ENCODE measurements at regions of chr20 and their contacts with region 1.

Region 1: DNA sequence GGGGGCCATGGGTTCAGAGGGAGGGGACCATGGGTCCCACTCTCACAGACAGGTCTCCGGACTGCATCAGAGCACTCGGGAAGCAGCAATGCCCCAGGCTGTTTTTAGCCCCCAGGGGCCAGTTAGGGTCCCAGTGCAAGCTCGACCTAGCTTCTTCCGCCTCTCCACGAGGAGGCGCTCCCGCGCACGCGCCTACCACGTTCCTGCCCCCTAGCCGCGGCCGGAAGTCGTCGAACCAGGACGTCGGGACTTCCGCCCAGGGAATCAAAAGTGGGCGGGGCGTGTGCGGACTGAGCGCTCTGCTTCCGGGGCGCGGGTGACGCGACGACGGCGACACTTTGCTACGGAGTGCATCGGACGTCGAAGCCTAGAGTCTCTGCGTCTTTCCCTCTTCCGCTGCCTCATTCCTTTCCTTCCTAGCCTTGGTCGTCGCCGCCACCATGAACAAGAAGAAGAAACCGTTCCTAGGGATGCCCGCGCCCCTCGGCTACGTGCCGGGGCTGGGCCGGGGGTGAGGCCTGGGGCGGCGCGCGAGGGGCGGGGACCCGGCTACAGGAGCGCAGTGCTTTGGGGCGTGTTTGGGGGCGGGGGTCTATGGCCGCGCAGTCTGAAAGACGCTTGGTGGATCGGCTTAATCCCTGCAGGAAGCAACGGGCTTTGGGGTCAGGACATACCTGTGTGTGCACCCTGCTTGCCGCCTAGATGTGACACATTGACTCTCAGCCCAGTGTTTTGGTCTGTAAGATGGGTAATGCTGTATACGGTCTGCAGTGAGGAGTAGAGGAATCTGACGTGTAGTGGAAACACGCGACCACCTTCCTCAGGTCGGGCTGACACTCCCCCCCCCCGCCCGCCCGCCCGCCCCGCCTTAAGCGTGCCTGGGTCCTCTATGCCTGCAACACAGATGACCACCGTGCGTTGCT is at the start of gene PRPF6:
- DNase-seq: peak; percentile 89 to 95 (median 92)
- ATAC-seq: peak; percentile 85
- H3K4me3 ChIP-seq: peak within 1 kb of the TSS; percentile 78
- H3K4me3 Mint-ChIP-seq: peak within 1 kb of the TSS; percentile 88 to 97 (median 95)
- H3K27ac ChIP-seq: peak within 1 kb of the TSS; percentile 95
- H3K27ac Mint-ChIP-seq: peak within 1 kb of the TSS; percentile 87 to 99 (median 96)
- H3K4me1 ChIP-seq: peaks cover 34 to 47% of the 10 kb centered on the region in 2 donors
- H3K4me1 Mint-ChIP-seq: peaks cover 53 to 77% (median 65%) of the 10 kb centered on the region in 7 donors
- H3K27me3 ChIP-seq: no peaks in the 10 kb centered on the region
- H3K27me3 Mint-ChIP-seq: no peaks in the 10 kb centered on the region
- total RNA-seq, gene PRPF6: 71.2 to 95.8 (median 82.9) TPM

Region 2: GRCh38 chr20:62219992-62220665 is 1760.9 kb before region 1 on chr20 and contains the start of gene HRH3:
- CTCF ChIA-PET with region 1: no interaction called
- POLR2A ChIA-PET with region 1: no interaction called
- intact Hi-C with region 1: no loop called
- DNase-seq: peak in 8 of 9 donors; percentile 25 to 69 (median 47)
- ATAC-seq: peak; percentile 87
- H3K4me3 ChIP-seq: no peak within 1 kb of the TSS
- H3K4me3 Mint-ChIP-seq: peak within 1 kb of the TSS in 9 of 10 donors; percentile 20 to 83 (median 47)
- H3K27ac ChIP-seq: no peak within 1 kb of the TSS
- H3K27ac Mint-ChIP-seq: no peak within 1 kb of the TSS
- H3K4me1 ChIP-seq: no peaks in the 10 kb centered on the region
- H3K4me1 Mint-ChIP-seq: peaks cover 0 to 5% (median 3%) of the 10 kb centered on the region in 7 donors
- H3K27me3 ChIP-seq: peaks cover 0 to 24% of the 10 kb centered on the region in 2 donors
- H3K27me3 Mint-ChIP-seq: peaks cover 17 to 52% (median 30%) of the 10 kb centered on the region in 5 donors
- total RNA-seq, gene HRH3: not detected

Region 3: DNA sequence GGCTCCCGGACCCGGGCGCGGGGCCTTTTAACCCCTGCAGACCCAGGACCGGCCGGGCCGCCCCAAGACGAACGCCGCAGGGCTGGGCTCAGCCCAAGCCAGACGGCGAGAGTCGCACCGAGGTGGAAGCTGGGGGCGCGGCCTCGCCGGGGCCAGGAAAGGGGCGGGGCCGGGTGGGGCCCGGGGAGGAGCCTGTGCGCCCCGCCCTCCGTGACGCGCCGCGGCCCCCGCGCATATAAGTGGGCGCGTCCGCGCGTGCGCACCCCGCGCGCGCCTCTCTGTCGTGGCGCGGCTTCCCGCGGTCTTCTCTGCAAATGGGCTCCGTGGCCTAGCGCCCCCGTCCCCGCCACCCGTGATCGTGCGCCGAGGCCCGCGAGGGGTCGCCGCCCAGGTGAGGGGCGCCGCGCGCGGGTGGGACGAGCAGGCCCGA is 460.5 kb before region 1 on chr20 and contains the start of gene PPDPF:
- CTCF ChIA-PET with region 1: no interaction called
- POLR2A ChIA-PET with region 1: interaction called, 5 read pairs
- intact Hi-C with region 1: loop called in 1 of 2 experiments (anchors 1 kb)
- DNase-seq: peak; percentile 76 to 92 (median 84)
- ATAC-seq: peak; percentile 96
- H3K4me3 ChIP-seq: peak within 1 kb of the TSS; percentile 86
- H3K4me3 Mint-ChIP-seq: peak within 1 kb of the TSS; percentile 65 to 89 (median 81)
- H3K27ac ChIP-seq: peak within 1 kb of the TSS; percentile 88
- H3K27ac Mint-ChIP-seq: peak within 1 kb of the TSS in 7 of 9 donors; percentile 51 to 88 (median 79)
- H3K4me1 ChIP-seq: peaks cover 11 to 14% of the 10 kb centered on the region in 2 donors
- H3K4me1 Mint-ChIP-seq: peaks cover 4 to 22% (median 9%) of the 10 kb centered on the region in 7 donors
- H3K27me3 ChIP-seq: no peaks in the 10 kb centered on the region
- H3K27me3 Mint-ChIP-seq: peaks cover 0 to 7% (median 0%) of the 10 kb centered on the region in 5 donors
- total RNA-seq, gene PPDPF: 138 to 225 (median 184) TPM

Region 4: DNA sequence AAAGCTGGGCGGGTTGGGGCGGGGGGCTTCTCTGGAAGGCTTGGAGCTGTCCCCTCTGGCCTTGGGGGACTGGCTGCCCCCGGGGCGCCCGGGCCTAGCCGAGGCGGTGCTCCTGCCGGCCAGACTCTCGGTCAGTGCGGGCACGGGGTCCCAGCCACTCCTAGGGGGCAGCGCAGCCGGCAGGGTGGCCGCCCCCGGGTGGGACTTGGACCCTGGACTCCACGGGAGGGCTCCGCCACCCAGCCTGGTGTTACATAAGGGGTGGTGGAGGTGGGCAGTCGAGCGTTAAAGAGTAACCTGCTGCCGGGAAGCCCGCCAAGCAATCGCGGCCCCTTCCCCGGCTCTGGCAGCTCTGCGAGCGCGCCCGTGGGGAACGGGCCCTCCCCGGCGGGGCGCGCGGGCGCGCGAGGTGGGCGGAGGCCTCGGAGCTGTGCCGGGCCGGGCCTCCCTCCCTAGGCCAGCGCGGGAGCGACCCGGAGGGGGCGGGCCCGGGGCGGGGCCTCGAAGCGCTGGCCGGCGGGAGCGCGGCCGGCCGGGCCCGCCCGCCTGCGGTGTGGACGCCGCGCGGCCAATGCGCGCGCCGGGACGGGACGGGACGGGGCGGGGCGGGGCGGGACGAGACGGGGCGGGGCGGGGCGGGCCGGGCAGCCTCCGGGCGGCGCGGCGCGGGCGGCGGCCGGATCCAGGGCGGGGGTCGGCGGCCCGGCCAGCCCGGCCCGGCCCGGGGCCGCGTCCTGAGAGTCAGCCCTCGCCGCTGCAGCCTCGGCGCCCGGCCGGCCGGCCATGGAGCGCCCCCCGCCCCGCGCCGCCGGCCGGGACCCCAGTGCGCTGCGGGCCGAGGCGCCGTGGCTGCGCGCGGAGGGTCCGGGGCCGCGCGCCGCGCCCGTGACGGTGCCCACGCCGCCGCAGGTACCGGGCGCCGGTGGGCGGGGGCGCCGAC is 241.7 kb before region 1 on chr20 and contains the start of gene SLC2A4RG:
- CTCF ChIA-PET with region 1: no interaction called
- POLR2A ChIA-PET with region 1: interaction called, 10 read pairs
- intact Hi-C with region 1: loop called in 1 of 2 experiments (anchors 5 kb)
- DNase-seq: peak; percentile 49 to 86 (median 69)
- ATAC-seq: peak; percentile 62
- H3K4me3 ChIP-seq: peak within 1 kb of the TSS; percentile 99
- H3K4me3 Mint-ChIP-seq: peak within 1 kb of the TSS; percentile 33 to 92 (median 80)
- H3K27ac ChIP-seq: peak within 1 kb of the TSS; percentile 71
- H3K27ac Mint-ChIP-seq: peak within 1 kb of the TSS in 1 of 9 donors; percentile 38
- H3K4me1 ChIP-seq: peaks cover 21 to 29% of the 10 kb centered on the region in 2 donors
- H3K4me1 Mint-ChIP-seq: peaks cover 7 to 20% (median 16%) of the 10 kb centered on the region in 7 donors
- H3K27me3 ChIP-seq: no peaks in the 10 kb centered on the region
- H3K27me3 Mint-ChIP-seq: no peaks in the 10 kb centered on the region
- total RNA-seq, gene SLC2A4RG: 88.7 to 136 (median 111) TPM

Region 5: DNA sequence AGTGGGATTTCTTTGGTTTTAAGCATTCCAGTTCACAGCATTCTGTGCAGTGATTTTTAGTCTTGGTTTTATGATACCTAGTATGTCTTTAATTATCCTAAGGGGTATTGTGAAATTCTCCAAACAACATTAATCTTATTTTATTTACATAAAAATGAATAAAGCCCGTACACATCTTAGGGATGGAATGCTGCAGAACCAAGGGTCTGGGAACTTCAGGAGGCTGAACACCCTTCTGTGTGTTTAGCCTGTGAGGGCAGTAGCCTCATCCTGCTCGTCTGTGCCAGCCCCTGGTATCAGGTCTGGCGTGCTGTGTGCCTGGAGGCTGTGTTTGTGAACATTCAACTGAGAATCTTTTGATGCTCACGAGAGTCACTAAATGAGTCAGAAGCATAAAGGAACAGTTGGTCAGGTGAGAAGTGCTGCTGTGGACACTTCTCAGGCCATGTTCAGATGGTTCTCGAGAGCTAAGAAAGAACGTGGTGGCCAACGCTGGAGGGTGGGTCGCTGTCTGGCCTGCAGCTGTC is 29.7 kb after region 1 on chr20:
- CTCF ChIA-PET with region 1: interaction called, 8 read pairs
- POLR2A ChIA-PET with region 1: interaction called, 16 read pairs
- intact Hi-C with region 1: loop called in 1 of 2 experiments (anchors 5 kb)
- DNase-seq: no peak
- ATAC-seq: no peak
- H3K4me3 ChIP-seq: peak overlapping the region; percentile 15
- H3K4me3 Mint-ChIP-seq: peak overlapping the region in 3 of 10 donors; percentile 45 to 68 (median 63)
- H3K27ac ChIP-seq: no peak overlapping the region
- H3K27ac Mint-ChIP-seq: peak overlapping the region in 3 of 9 donors; percentile 68 to 86 (median 84)
- H3K4me1 ChIP-seq: peaks cover 29 to 36% of the 10 kb centered on the region in 2 donors
- H3K4me1 Mint-ChIP-seq: peaks cover 16 to 52% (median 44%) of the 10 kb centered on the region in 7 donors
- H3K27me3 ChIP-seq: no peaks in the 10 kb centered on the region
- H3K27me3 Mint-ChIP-seq: no peaks in the 10 kb centered on the region

Region 6: GRCh38 chr20:64062596-64063388 is 81.7 kb after region 1 on chr20 and contains the start of gene TCEA2:
- CTCF ChIA-PET with region 1: interaction called, 6 read pairs
- POLR2A ChIA-PET with region 1: interaction called, 6 read pairs
- intact Hi-C with region 1: loop called (anchors 1 kb)
- DNase-seq: peak; percentile 85 to 95 (median 90)
- ATAC-seq: peak; percentile 97
- H3K4me3 ChIP-seq: peak within 1 kb of the TSS; percentile 56
- H3K4me3 Mint-ChIP-seq: peak within 1 kb of the TSS; percentile 83 to 95 (median 88)
- H3K27ac ChIP-seq: peak within 1 kb of the TSS; percentile 74
- H3K27ac Mint-ChIP-seq: peak within 1 kb of the TSS; percentile 69 to 95 (median 79)
- H3K4me1 ChIP-seq: peaks cover 23 to 40% of the 10 kb centered on the region in 2 donors
- H3K4me1 Mint-ChIP-seq: peaks cover 30 to 54% (median 37%) of the 10 kb centered on the region in 7 donors
- H3K27me3 ChIP-seq: no peaks in the 10 kb centered on the region
- H3K27me3 Mint-ChIP-seq: no peaks in the 10 kb centered on the region
- total RNA-seq, gene TCEA2: 35.5 to 73.2 (median 47.3) TPM

Region 7: GRCh38 chr20:64119681-64120341 is 138.7 kb after region 1 on chr20:
- CTCF ChIA-PET with region 1: no interaction called
- POLR2A ChIA-PET with region 1: interaction called, 3 read pairs
- intact Hi-C with region 1: loop called (anchors 1 to 2 kb)
- DNase-seq: peak in 3 of 9 donors; percentile 2 to 24 (median 14)
- ATAC-seq: peak; percentile 18
- H3K4me3 ChIP-seq: peak overlapping the region; percentile 36
- H3K4me3 Mint-ChIP-seq: peak overlapping the region; percentile 39 to 80 (median 73)
- H3K27ac ChIP-seq: peak overlapping the region; percentile 22
- H3K27ac Mint-ChIP-seq: peak overlapping the region; percentile 69 to 85 (median 78)
- H3K4me1 ChIP-seq: peaks cover 5 to 9% of the 10 kb centered on the region in 2 donors
- H3K4me1 Mint-ChIP-seq: peaks cover 0 to 10% (median 8%) of the 10 kb centered on the region in 7 donors
- H3K27me3 ChIP-seq: no peaks in the 10 kb centered on the region
- H3K27me3 Mint-ChIP-seq: peaks cover 0 to 28% (median 0%) of the 10 kb centered on the region in 5 donors

Region 8: DNA sequence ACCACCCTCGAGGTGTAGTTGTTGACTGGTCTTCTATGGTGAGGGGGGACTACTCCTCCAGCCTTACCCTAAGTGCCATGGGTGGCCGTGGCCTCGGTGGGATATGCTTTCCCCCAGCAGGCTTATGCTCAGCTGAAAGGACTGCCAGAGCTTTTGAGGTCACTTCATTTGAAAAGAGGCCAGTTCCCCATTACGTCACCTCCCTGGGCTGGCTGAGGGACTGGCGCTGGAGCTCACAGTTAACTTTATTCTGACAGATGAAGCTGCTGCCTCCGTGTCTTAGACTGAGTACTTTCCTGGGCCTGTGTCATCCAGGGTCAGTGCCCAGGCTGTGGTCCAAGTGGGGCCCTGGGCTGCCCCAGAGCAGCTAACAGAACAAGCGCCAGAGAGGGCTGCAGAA is 231.7 kb after region 1 on chr20:
- CTCF ChIA-PET with region 1: no interaction called
- POLR2A ChIA-PET with region 1: no interaction called
- intact Hi-C with region 1: no loop called
- DNase-seq: no peak
- ATAC-seq: no peak
- H3K4me3 ChIP-seq: no peak overlapping the region
- H3K4me3 Mint-ChIP-seq: no peak overlapping the region
- H3K27ac ChIP-seq: no peak overlapping the region
- H3K27ac Mint-ChIP-seq: peak overlapping the region in 1 of 9 donors; percentile 56
- H3K4me1 ChIP-seq: no peaks in the 10 kb centered on the region
- H3K4me1 Mint-ChIP-seq: peaks cover 2 to 18% (median 10%) of the 10 kb centered on the region in 7 donors
- H3K27me3 ChIP-seq: no peaks in the 10 kb centered on the region
- H3K27me3 Mint-ChIP-seq: peaks cover 0 to 3% (median 0%) of the 10 kb centered on the region in 5 donors